Activated T-helper 1 cell treated with anti-CD3 and anti-CD28 coated beads, Interleukin-12 subunit alpha, Interleukin-12 subunit beta, Interleukin-2, Interleukin-4 antibody, amounts not matched to agents 30 ng/mL and 10 ng/mL and 1 ng/mL, durations not matched to agents 14 hours and 24 hours and 36 hours (primary cell): ENCODE measurements at regions of chr1 and their contacts with region 1.

Region 1: DNA sequence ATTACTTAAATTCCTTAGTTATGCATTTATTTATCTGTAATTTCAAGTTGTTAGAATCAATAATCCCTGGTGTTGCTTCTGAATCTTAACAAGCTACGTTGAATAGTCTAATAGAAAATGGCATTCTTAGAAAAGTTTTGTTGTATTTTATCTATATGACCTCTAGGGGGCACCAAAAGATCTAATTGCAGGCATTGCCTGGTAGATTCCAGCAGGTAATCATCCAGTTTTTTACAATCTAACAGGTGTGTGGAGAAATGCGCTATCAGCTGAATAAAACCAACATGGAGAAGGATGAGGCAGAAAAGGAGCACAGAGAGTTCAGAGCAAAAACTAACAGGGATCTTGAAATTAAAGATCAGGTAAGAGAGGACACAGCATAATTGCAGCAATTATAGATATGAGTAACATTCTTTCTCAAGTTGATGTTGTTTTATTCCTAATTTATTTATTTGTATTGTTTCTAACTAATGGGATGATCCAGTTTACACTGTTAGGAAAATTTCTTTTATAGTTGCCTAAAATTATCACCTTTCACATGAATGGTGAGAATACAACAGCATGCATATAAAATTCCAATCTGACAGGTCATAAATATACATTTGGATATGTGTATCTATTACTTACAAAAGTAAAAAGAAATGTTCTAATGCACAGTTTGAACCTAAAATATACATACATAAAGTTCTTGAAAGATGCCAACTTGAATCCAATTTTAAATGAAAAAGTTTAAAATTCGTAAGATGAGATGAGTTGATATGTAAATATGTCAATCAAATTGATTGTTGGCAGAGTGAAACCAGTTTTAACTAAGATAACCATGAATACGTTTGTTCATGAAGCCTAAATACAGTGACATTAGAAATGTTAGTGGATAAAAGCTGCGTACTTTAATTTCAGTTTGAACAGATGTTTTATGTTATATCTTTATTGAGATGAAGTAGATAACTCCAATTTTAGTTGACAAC is 88.4 kb downstream of the SDCCAG8 start:
- DNase-seq: no peak
- H3K4me3 Mint-ChIP-seq: no peak overlapping the region
- H3K27ac Mint-ChIP-seq: no peak overlapping the region
- H3K4me1 Mint-ChIP-seq: peaks cover 5% of the 10 kb centered on the region
- H3K27me3 Mint-ChIP-seq: no peaks in the 10 kb centered on the region

Region 2: GRCh38 chr1:243390162-243390791 is 46.0 kb after region 1 on chr1:
- intact Hi-C with region 1: no loop called
- DNase-seq: no peak
- H3K4me3 Mint-ChIP-seq: no peak overlapping the region
- H3K27ac Mint-ChIP-seq: no peak overlapping the region
- H3K4me1 Mint-ChIP-seq: peaks cover 13% of the 10 kb centered on the region
- H3K27me3 Mint-ChIP-seq: no peaks in the 10 kb centered on the region

Region 3: DNA sequence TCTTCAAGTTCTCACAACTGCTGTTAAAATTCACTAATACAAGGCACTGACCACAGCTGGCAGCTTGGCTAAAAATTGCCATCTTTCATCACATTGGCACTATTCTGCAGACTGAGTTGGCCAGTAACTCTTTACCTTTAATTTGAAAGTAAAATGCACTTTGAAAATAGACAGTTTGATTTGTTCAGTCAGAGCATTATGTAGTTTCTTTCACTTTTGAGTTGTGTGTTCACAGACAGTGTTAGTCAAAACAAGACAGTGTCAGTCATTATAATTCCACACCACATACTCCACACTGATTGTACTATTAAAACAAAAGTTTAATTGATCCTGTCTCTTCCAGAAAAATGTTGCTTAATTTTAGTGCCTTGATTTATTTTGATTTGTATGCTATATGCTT is 72.2 kb after region 1 on chr1:
- intact Hi-C with region 1: loop called (anchors 2 kb)
- DNase-seq: no peak
- H3K4me3 Mint-ChIP-seq: peak overlapping the region; percentile 39
- H3K27ac Mint-ChIP-seq: peak overlapping the region; percentile 64
- H3K4me1 Mint-ChIP-seq: peaks cover 66% of the 10 kb centered on the region
- H3K27me3 Mint-ChIP-seq: no peaks in the 10 kb centered on the region

Region 4: GRCh38 chr1:243596431-243597062 is 252.3 kb after region 1 on chr1:
- intact Hi-C with region 1: loop called (anchors 2 kb)
- DNase-seq: peak; percentile 32
- H3K4me3 Mint-ChIP-seq: peak overlapping the region; percentile 75
- H3K27ac Mint-ChIP-seq: peak overlapping the region; percentile 94
- H3K4me1 Mint-ChIP-seq: peaks cover 32% of the 10 kb centered on the region
- H3K27me3 Mint-ChIP-seq: no peaks in the 10 kb centered on the region

Region 5: GRCh38 chr1:243890576-243890975 is 546.3 kb after region 1 on chr1:
- intact Hi-C with region 1: no loop called
- DNase-seq: no peak
- H3K4me3 Mint-ChIP-seq: no peak overlapping the region
- H3K27ac Mint-ChIP-seq: no peak overlapping the region
- H3K4me1 Mint-ChIP-seq: no peaks in the 10 kb centered on the region
- H3K27me3 Mint-ChIP-seq: peaks cover 6% of the 10 kb centered on the region

Region 6: GRCh38 chr1:243946946-243947345 is 602.7 kb after region 1 on chr1:
- intact Hi-C with region 1: loop called (anchors 1 kb)
- DNase-seq: no peak
- H3K4me3 Mint-ChIP-seq: no peak overlapping the region
- H3K27ac Mint-ChIP-seq: no peak overlapping the region
- H3K4me1 Mint-ChIP-seq: no peaks in the 10 kb centered on the region
- H3K27me3 Mint-ChIP-seq: peaks cover 2% of the 10 kb centered on the region

Region 7: DNA sequence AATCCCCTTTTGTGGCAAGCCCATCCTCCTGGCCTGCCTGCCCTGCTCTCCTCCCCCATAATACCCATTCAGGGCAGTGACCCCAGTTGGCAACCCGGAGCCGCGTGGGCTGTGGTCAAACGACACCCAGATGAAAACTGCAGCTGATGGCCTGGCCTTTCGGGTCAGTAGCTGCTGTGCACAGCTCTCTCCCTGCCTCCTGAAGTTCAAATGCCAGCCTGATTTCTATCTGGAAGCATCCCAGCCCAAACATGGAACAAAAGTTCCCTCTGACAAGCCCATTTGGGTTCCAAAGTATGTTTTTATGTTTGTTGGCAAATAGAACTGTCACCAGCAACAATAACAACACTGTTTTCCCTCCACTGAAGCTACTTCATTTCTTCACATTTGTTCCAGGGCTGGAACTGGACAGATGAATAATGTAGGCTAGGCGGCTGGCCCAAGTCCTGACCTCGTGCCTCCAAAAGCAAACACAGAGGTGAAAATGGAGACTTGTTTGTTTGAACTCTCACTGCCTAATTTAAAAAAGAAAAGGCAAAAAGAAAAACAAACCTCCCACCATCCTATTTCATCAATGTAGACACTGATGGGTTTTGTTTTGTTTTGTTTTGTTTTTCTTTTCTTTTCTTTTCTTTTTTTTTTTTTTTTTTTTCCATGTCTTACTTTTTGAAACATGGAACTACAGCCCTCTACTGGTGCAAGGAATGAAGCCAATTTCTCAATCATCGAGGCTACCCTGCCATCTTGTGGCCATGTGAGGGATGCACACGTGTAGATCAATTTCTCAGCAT is 928.4 kb after region 1 on chr1:
- intact Hi-C with region 1: loop called (anchors 1 kb)
- DNase-seq: peak; percentile 52
- H3K4me3 Mint-ChIP-seq: no peak overlapping the region
- H3K27ac Mint-ChIP-seq: no peak overlapping the region
- H3K4me1 Mint-ChIP-seq: peaks cover 8% of the 10 kb centered on the region
- H3K27me3 Mint-ChIP-seq: peaks cover 3% of the 10 kb centered on the region